ENCODE measurements at regions of chr4 and their contacts with region 1.

Region 1: DNA sequence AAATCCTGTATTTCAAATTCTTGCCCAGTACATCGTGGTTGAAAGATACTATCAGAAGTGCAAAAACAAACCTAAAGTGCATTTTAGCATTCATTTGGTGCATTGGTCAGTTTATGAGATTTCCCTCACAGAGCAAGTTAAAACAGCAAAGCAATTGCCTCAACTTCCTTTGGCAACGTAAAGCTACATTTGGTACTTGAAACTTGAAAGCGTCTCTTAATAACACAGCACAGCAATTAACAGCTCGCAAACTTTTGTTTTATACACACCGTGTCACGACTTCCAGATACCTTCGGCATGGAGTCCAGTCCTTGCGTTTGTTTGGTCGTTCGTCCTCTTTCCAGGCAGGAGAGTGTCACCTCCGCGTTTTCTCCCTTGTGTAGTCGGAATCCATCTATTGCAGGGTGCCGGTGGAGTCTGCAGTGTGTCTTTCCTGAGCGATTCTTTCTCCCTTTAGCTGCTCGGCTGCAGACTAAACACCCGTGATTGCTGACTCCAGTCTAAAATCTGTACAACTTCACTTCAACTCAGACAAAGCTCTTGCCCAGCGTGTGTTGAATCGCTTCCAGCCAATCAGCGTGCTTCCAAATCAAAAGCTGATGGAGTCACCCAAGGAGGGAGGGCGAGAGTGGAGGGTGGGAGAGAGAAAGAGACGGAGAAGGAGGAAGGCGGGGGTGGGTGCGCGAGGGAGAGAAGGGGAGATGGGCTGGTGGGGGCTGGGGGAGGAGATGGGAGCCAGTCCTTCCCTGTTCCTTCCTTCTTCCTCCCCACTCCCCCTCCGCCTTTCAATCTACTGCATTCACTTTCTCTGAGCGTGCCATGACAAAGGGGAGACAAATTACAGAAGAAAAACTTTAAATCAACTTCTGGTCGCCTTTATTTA is at the start of gene PCDH18:
- DNase-seq: peak in 1 of 2 donors; percentile 97
- H3K4me3 ChIP-seq: peak within 1 kb of the TSS; percentile 57 to 67
- H3K27ac ChIP-seq: peak within 1 kb of the TSS; percentile 84
- H3K4me1 ChIP-seq: no peaks in the 10 kb centered on the region
- H3K27me3 ChIP-seq: no peaks in the 10 kb centered on the region
- CTCF ChIP-seq: no peak
- POLR2A ChIP-seq: peak in 1 of 2 donors; percentile 61
- total RNA-seq, gene PCDH18: 32.9 TPM

Region 2: GRCh38 chr4:137685357-137685756 is 153.1 kb after region 1 on chr4:
- intact Hi-C with region 1: no loop called
- DNase-seq: no peak
- H3K4me3 ChIP-seq: no peak overlapping the region
- H3K27ac ChIP-seq: no peak overlapping the region
- H3K4me1 ChIP-seq: no peaks in the 10 kb centered on the region
- H3K27me3 ChIP-seq: no peaks in the 10 kb centered on the region
- CTCF ChIP-seq: no peak
- POLR2A ChIP-seq: no peak

Region 3: DNA sequence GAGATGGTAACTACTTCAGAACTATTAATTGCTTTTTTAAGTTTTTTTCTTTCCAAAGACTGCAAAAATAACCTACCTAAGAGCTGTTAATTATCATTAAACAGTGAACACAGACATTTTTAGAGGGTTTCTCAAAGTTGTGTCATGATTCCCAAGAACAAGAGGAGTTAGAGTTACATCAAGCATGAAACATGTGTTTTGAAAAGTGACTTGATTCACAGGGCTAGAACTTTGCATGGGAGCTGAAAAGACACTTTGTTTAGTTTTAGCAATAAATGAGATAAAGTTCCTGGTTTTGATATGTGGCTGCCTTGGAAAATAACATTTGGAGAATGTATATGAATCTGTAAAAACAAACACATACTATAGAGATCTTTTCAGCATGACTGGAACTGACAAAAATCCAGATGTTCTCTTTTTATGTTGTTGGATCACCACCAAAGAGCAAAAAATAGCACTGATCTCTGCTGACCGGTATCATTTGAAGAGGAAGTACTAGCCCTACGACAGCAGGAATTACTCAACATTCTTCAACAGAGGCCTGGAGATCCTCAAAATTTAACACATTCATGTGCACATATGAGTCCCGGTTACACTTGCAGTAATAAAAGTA is 173.1 kb after region 1 on chr4:
- intact Hi-C with region 1: loop called (anchors 10 kb)
- DNase-seq: no peak
- H3K4me3 ChIP-seq: no peak overlapping the region
- H3K27ac ChIP-seq: peak overlapping the region; percentile 46
- H3K4me1 ChIP-seq: peaks cover 11% of the 10 kb centered on the region
- H3K27me3 ChIP-seq: no peaks in the 10 kb centered on the region
- CTCF ChIP-seq: no peak
- POLR2A ChIP-seq: no peak

Region 4: DNA sequence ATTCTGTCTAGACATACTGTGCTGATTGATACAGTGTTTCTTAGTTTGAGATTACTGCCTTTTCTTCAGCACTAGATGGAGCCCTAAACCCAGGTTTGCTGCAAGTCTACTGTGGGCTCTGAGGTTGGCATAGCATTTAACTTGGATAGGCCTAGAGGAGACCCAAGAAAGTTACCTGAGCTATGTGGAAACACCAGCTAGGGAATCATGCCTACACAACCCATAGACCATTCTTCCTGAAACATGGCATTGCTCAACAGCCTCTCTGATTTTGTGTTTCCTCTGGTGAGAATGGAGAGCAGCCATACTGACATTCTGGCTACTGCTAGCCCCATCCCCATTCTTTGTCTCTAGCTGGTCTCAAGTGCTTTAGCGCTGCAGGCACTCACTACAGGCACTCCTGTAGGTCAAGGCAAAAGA is 287.7 kb after region 1 on chr4:
- intact Hi-C with region 1: no loop called
- DNase-seq: no peak
- H3K4me3 ChIP-seq: no peak overlapping the region
- H3K27ac ChIP-seq: no peak overlapping the region
- H3K4me1 ChIP-seq: no peaks in the 10 kb centered on the region
- H3K27me3 ChIP-seq: no peaks in the 10 kb centered on the region
- CTCF ChIP-seq: no peak
- POLR2A ChIP-seq: no peak

Measured in vagina (tissue), 2 donors.